CD4-positive, alpha-beta T cell (primary cell): ENCODE measurements at regions of chr2 and their contacts with region 1.

Region 1: DNA sequence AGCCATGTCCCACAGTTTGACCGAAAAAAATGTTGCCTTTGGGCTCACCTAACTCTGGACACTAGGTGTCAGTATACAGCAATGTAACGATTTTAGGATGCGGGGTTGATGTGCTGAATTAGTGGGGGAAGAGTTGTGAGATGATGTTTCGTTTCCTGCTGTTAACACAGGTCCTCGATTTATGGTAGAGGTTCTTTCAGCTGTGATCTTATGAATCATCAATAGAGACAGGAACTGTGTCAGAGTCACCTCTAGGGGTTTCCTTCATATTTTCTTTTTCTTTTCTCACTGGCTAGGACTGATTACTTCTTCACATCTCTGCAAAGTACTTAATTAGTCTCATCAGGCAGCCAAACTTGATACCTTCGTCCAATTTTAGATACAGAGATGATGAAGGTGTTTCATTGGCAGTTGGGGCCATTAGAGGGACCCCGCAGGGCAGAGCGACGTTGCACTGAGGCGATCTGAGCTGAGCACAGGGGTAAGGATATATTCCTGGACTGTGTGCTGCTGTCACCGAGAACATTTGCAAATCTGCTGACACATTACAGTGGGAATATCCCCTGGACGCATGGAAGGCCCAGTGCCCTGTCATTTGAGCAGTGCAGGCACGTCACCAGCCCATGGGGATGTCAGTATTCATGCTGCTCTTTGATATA is 10.2 kb upstream of the MMADHC start:
- DNase-seq: peak; percentile 2 to 81 (median 34)
- ATAC-seq: peak; percentile 95
- H3K4me3 ChIP-seq: no peak overlapping the region
- H3K4me3 Mint-ChIP-seq: peak overlapping the region; percentile 34
- H3K27ac ChIP-seq: no peak overlapping the region
- H3K27ac Mint-ChIP-seq: no peak overlapping the region
- H3K4me1 ChIP-seq: peaks cover 12% of the 10 kb centered on the region
- H3K4me1 Mint-ChIP-seq: peaks cover 16% of the 10 kb centered on the region
- H3K27me3 ChIP-seq: peaks cover 0 to 6% of the 10 kb centered on the region in 2 experiments
- H3K27me3 Mint-ChIP-seq: peaks cover 39% of the 10 kb centered on the region
- CTCF ChIP-seq: peak; percentile 82

Region 2: DNA sequence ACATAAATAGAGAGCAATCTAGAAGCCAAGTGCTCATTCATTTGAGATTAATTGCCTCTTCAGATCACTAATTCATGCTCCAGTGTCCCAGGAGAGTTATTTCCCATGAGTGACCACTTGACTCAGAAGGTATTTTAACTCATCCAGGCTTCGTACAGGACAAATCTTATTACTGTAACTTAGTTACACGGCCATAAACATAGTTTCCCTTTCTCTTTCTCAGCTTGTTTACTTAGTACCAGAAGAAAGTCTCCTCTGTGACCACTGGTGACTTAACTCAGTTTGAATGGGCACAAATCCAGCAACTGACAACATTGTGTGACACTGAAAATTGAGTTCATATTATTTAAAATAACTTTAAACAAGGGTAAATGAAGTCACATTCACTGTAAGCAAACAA is 35.5 kb before region 1 on chr2:
- CTCF ChIA-PET with region 1: no interaction called
- POLR2A ChIA-PET with region 1: no interaction called
- intact Hi-C with region 1: no loop called
- DNase-seq: no peak
- ATAC-seq: no peak
- H3K4me3 ChIP-seq: no peak overlapping the region
- H3K4me3 Mint-ChIP-seq: no peak overlapping the region
- H3K27ac ChIP-seq: no peak overlapping the region
- H3K27ac Mint-ChIP-seq: no peak overlapping the region
- H3K4me1 ChIP-seq: no peaks in the 10 kb centered on the region
- H3K4me1 Mint-ChIP-seq: no peaks in the 10 kb centered on the region
- H3K27me3 ChIP-seq: no peaks in the 10 kb centered on the region
- H3K27me3 Mint-ChIP-seq: no peaks in the 10 kb centered on the region
- CTCF ChIP-seq: no peak

Region 3: DNA sequence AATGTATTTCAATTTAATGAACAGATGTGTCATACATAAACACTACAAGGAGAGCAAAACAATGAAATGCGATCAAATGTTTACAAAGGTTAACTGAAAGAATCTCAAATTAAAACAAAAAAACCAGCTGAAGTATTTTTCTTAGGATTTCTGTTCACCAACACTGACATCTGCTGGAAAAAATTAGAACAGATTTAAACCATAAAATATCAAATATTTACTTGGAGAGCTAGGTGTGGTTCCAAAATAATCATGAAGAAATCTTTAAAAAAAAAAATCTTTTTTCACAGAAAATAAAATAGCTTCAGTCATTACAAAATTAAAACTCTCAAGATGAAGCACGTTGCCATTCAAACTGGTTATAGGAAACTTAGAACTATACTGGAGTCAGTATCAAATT is 24.0 kb before region 1 on chr2:
- CTCF ChIA-PET with region 1: no interaction called
- POLR2A ChIA-PET with region 1: no interaction called
- intact Hi-C with region 1: no loop called
- DNase-seq: no peak
- ATAC-seq: no peak
- H3K4me3 ChIP-seq: no peak overlapping the region
- H3K4me3 Mint-ChIP-seq: no peak overlapping the region
- H3K27ac ChIP-seq: no peak overlapping the region
- H3K27ac Mint-ChIP-seq: no peak overlapping the region
- H3K4me1 ChIP-seq: no peaks in the 10 kb centered on the region
- H3K4me1 Mint-ChIP-seq: peaks cover 31% of the 10 kb centered on the region
- H3K27me3 ChIP-seq: no peaks in the 10 kb centered on the region
- H3K27me3 Mint-ChIP-seq: no peaks in the 10 kb centered on the region
- CTCF ChIP-seq: no peak

Region 4: GRCh38 chr2:150484461-150485021 is 886.7 kb after region 1 on chr2:
- CTCF ChIA-PET with region 1: no interaction called
- POLR2A ChIA-PET with region 1: no interaction called
- intact Hi-C with region 1: loop called in 1 of 2 experiments (anchors 5 kb)
- DNase-seq: no peak
- ATAC-seq: no peak
- H3K4me3 ChIP-seq: no peak overlapping the region
- H3K4me3 Mint-ChIP-seq: no peak overlapping the region
- H3K27ac ChIP-seq: no peak overlapping the region
- H3K27ac Mint-ChIP-seq: no peak overlapping the region
- H3K4me1 ChIP-seq: peaks cover 13% of the 10 kb centered on the region
- H3K4me1 Mint-ChIP-seq: peaks cover 12% of the 10 kb centered on the region
- H3K27me3 ChIP-seq: peaks cover 26 to 50% of the 10 kb centered on the region in 2 experiments
- H3K27me3 Mint-ChIP-seq: peaks cover 61% of the 10 kb centered on the region
- CTCF ChIP-seq: no peak

Region 5: DNA sequence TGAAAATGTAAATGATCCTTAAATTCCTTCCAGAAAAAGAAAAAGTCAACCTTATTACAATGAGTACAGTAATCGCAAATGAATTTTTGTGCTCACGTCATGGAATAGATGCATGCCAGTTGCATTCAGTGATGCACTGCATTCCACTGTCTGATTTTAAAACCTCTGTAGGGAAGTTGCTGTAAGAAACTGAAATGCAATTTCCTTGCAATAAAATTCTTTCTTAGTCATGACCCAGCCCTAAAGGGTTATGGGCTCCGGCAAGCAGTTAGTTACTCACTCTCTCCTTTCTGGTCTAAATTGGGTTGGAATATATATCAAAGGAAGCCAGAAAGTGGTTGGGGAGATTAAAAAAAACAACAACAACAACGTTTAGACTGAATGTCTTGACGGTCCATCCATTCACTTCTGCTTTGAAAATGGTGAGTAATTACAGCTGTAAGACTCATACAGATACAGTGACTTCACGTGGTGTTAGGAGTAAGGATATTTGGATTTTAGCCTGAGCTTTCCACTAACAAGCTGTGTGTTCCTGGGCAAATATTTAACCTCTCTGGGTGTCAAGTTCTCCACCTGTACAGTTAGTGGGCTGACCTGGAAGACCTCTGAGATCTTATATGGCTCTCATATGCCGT is 898.3 kb after region 1 on chr2:
- CTCF ChIA-PET with region 1: no interaction called
- POLR2A ChIA-PET with region 1: no interaction called
- intact Hi-C with region 1: loop called in 1 of 2 experiments (anchors 10 kb)
- DNase-seq: no peak
- ATAC-seq: no peak
- H3K4me3 ChIP-seq: no peak overlapping the region
- H3K4me3 Mint-ChIP-seq: no peak overlapping the region
- H3K27ac ChIP-seq: no peak overlapping the region
- H3K27ac Mint-ChIP-seq: no peak overlapping the region
- H3K4me1 ChIP-seq: no peaks in the 10 kb centered on the region
- H3K4me1 Mint-ChIP-seq: no peaks in the 10 kb centered on the region
- H3K27me3 ChIP-seq: no peaks in the 10 kb centered on the region
- H3K27me3 Mint-ChIP-seq: peaks cover 3% of the 10 kb centered on the region
- CTCF ChIP-seq: no peak

Region 6: GRCh38 chr2:150610671-150611279 is 1013.0 kb after region 1 on chr2:
- CTCF ChIA-PET with region 1: no interaction called
- POLR2A ChIA-PET with region 1: no interaction called
- intact Hi-C with region 1: loop called (anchors 2 to 5 kb)
- DNase-seq: peak in 1 of 14 experiments; percentile 1
- ATAC-seq: no peak
- H3K4me3 ChIP-seq: no peak overlapping the region
- H3K4me3 Mint-ChIP-seq: no peak overlapping the region
- H3K27ac ChIP-seq: no peak overlapping the region
- H3K27ac Mint-ChIP-seq: no peak overlapping the region
- H3K4me1 ChIP-seq: no peaks in the 10 kb centered on the region
- H3K4me1 Mint-ChIP-seq: no peaks in the 10 kb centered on the region
- H3K27me3 ChIP-seq: no peaks in the 10 kb centered on the region
- H3K27me3 Mint-ChIP-seq: no peaks in the 10 kb centered on the region
- CTCF ChIP-seq: no peak

Region 7: DNA sequence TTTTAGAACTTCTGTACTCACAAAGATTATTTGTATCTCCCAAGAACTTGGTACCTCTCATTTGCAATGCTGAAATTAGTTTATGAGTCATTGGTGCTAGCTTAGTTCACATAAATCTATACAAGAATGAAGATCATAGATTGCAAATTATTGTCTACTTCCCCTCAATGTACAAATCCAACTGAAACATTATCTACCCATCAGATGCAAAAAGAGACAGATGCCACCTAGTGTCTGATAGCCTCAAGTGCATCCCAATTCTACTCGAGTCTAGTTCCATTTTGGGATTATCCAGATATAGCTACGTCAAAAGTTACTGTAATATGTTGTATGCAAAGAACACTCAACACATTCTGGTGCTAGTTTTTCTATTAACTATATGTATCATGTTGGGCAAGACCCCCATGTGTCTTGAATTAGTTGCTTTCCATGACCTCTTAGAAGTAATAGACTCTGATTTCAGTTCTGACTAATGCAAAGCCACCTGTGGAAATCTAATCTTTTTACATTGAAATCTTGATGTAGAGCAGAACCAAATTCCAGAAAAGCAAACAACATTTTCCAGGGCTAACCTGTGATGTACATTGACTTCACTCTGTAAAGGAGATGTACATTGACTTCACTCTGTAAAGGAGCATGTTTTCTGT is 1453.9 kb after region 1 on chr2:
- CTCF ChIA-PET with region 1: no interaction called
- POLR2A ChIA-PET with region 1: interaction called, 3 read pairs
- intact Hi-C with region 1: loop called (anchors 1 kb)
- DNase-seq: peak in 5 of 14 experiments; percentile 3 to 59 (median 31)
- ATAC-seq: peak; percentile 56
- H3K4me3 ChIP-seq: no peak overlapping the region
- H3K4me3 Mint-ChIP-seq: no peak overlapping the region
- H3K27ac ChIP-seq: no peak overlapping the region
- H3K27ac Mint-ChIP-seq: no peak overlapping the region
- H3K4me1 ChIP-seq: no peaks in the 10 kb centered on the region
- H3K4me1 Mint-ChIP-seq: no peaks in the 10 kb centered on the region
- H3K27me3 ChIP-seq: no peaks in the 10 kb centered on the region
- H3K27me3 Mint-ChIP-seq: no peaks in the 10 kb centered on the region
- CTCF ChIP-seq: peak; percentile 78

Region 8: DNA sequence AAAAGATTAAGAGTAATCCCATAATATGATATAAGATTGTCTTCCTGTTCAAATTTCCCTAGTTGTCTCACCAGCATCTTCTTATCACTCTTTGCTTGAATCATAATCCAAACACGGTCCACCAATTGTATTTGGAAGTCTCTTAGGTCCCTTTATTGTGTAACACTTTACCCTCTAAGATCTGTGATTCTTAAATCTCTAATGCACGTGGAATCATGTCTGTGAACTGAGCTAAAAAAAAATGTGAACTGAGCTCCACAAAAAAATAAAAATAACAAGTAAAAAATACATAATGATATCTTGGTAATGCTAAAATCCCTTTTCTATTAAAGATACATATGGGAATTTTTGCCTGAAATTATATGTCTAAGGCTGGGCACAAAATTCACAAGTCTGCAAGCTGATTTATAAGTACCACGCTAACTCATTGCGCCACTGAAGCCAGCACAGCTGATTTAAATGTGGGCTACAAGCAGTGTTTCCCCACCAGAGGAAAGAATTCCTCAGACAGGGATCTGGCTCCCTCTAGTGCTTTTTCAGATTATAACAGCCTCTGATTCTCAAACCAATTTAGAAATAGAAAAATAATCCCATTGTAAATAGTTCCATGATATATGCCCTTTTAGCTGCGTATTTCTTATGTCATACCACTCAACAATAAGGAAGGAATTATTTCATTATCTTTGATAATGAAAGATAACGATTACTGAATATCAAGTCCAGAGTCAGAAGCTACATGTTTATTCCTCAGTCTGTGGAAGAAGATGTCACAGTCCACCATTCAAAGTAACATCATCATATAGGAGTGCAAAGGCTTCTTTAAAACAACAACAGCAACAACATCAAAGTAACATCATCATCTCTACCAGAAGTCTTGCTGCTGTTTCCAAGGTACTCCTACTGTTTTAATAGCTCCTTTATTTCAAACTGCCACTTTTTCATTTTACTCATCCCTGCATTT is 1641.0 kb after region 1 on chr2:
- CTCF ChIA-PET with region 1: interaction called, 10 read pairs
- POLR2A ChIA-PET with region 1: no interaction called
- intact Hi-C with region 1: loop called (anchors 1 to 2 kb)
- DNase-seq: peak in 8 of 14 experiments; percentile 2 to 71 (median 22)
- ATAC-seq: peak; percentile 63
- H3K4me3 ChIP-seq: no peak overlapping the region
- H3K4me3 Mint-ChIP-seq: no peak overlapping the region
- H3K27ac ChIP-seq: no peak overlapping the region
- H3K27ac Mint-ChIP-seq: no peak overlapping the region
- H3K4me1 ChIP-seq: no peaks in the 10 kb centered on the region
- H3K4me1 Mint-ChIP-seq: peaks cover 4% of the 10 kb centered on the region
- H3K27me3 ChIP-seq: no peaks in the 10 kb centered on the region
- H3K27me3 Mint-ChIP-seq: no peaks in the 10 kb centered on the region
- CTCF ChIP-seq: peak; percentile 97

Region 9: GRCh38 chr2:151437630-151438029 is 1839.8 kb after region 1 on chr2:
- CTCF ChIA-PET with region 1: no interaction called
- POLR2A ChIA-PET with region 1: no interaction called
- intact Hi-C with region 1: loop called (anchors 2 to 5 kb)
- DNase-seq: peak in 5 of 14 experiments; percentile 7 to 49 (median 47)
- ATAC-seq: peak; percentile 78
- H3K4me3 ChIP-seq: no peak overlapping the region
- H3K4me3 Mint-ChIP-seq: no peak overlapping the region
- H3K27ac ChIP-seq: no peak overlapping the region
- H3K27ac Mint-ChIP-seq: peak overlapping the region; percentile 77
- H3K4me1 ChIP-seq: peaks cover 4% of the 10 kb centered on the region
- H3K4me1 Mint-ChIP-seq: peaks cover 8% of the 10 kb centered on the region
- H3K27me3 ChIP-seq: no peaks in the 10 kb centered on the region
- H3K27me3 Mint-ChIP-seq: no peaks in the 10 kb centered on the region
- CTCF ChIP-seq: peak; percentile 85